ENCODE measurements at regions of chr10 and their contacts with region 1.

Region 1: DNA sequence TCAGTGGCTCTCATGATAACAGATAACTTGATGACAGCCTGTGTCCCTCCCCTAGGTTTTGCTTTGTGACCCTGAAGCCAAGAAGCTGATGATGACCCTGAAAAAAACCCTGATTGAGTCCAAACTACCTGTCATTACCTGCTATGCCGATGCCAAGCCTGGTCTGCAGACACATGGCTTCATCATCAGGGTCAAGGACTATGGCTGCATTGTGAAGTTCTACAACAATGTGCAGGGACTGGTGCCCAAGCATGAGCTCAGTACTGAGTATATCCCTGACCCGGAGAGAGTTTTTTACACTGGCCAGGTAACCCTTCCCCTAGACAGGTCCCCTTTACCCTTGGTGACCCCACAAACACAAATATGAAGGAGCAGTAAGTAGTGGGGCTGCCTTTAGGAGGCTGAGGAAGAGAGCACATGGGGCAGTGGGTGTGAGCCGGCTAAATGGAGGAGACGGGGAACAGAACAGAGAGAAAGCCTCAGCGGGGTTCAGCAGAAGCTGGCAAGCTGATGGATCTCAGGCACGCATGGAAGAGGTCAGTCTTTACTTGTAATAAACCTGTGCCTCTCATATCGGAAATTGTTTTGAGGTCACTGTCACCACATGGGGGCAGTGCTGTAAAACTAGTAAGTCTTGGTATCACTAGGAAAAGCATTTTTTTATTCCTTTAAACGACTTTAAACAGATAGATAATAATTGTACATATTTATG is 20.2 kb downstream of the PDCD11 start:
- DNase-seq: peak; percentile 65
- ATAC-seq: peak; percentile 77
- H3K4me3 ChIP-seq: no peak overlapping the region
- H3K27ac ChIP-seq: no peak overlapping the region
- H3K4me1 ChIP-seq: no peaks in the 10 kb centered on the region
- H3K27me3 ChIP-seq: no peaks in the 10 kb centered on the region
- CTCF ChIP-seq: peak; percentile 53
- POLR2A ChIP-seq: no peak
- RAD21 ChIP-seq: peak; percentile 63

Region 2: GRCh38 chr10:103197177-103197576 is 219.4 kb before region 1 on chr10:
- CTCF ChIA-PET with region 1: no interaction called
- POLR2A ChIA-PET with region 1: no interaction called
- dilution Hi-C with region 1: no loop called
- in situ Hi-C with region 1: no loop called
- intact Hi-C with region 1: no loop called
- DNase-seq: peak; percentile 75
- ATAC-seq: peak; percentile 25; the same call in 1 of the 2 replicates
- H3K4me3 ChIP-seq: no peak overlapping the region
- H3K27ac ChIP-seq: peak overlapping the region; percentile 38
- H3K4me1 ChIP-seq: peaks cover 18% of the 10 kb centered on the region
- H3K27me3 ChIP-seq: no peaks in the 10 kb centered on the region
- CTCF ChIP-seq: no peak
- POLR2A ChIP-seq: no peak
- RAD21 ChIP-seq: no peak

Region 3: DNA sequence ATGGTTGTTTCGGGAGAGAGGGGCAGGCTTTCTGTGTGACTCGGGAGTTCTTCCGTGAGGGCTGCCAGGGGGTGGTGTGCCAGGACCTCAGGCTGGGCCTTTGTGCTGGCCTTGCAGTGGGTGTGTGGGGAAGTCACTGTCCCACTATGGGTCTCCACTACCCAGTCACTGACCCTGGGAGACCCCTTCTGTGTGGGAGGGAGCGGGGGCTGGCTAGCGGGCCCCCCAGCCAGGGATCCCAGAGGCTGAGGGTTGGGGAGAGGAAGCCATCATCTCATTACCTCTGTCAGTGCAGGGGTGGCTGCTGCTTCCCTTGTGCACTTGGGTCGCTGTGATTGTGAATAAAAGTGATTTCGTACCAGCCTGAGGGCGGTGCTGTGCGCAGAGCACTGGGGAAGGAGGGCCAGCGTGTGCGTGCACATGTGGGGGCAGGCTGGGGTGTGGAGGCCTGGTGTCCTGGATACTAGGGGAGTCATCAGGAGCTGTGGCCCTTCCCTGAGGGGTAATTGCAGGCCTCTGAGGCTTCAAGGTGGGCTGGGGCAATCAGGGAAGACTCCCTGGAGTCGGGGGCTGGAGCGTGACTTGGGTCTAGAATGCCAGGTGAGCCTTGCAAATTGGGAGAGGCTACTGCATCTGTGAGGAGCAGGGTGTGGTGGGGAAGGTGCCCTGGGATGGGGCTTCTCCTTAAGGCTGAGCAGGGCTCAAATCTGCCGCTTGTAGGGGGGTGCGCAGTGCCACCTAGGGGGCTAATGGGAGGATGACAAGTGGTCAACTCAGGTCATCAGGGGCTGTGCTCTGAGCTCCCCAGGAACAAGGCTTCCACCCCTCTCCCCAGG is 175.8 kb after region 1 on chr10:
- CTCF ChIA-PET with region 1: no interaction called
- POLR2A ChIA-PET with region 1: no interaction called
- dilution Hi-C with region 1: no loop called
- in situ Hi-C with region 1: no loop called
- intact Hi-C with region 1: loop called (anchors 5 kb)
- DNase-seq: peak; percentile 38
- ATAC-seq: peak; percentile 79
- H3K4me3 ChIP-seq: no peak overlapping the region
- H3K27ac ChIP-seq: no peak overlapping the region
- H3K4me1 ChIP-seq: no peaks in the 10 kb centered on the region; the same call in 1 of the 2 replicates
- H3K27me3 ChIP-seq: no peaks in the 10 kb centered on the region; the same call in 1 of the 2 replicates
- CTCF ChIP-seq: peak; percentile 63
- POLR2A ChIP-seq: no peak
- RAD21 ChIP-seq: peak; percentile 61

Measured in IMR-90 (cell line).